ENCODE measurements at regions of chr16 and their contacts with region 1.

Region 1: GRCh38 chr16:53773150-53773846 is 69.3 kb downstream of the FTO start:
- DNase-seq: peak; percentile 72
- H3K4me3 ChIP-seq: no peak overlapping the region
- H3K27ac ChIP-seq: peak overlapping the region; percentile 11
- H3K4me1 ChIP-seq: peaks cover 60% of the 10 kb centered on the region
- H3K27me3 ChIP-seq: no peaks in the 10 kb centered on the region
- CTCF ChIP-seq: peak; percentile 70 to 81

Region 2: DNA sequence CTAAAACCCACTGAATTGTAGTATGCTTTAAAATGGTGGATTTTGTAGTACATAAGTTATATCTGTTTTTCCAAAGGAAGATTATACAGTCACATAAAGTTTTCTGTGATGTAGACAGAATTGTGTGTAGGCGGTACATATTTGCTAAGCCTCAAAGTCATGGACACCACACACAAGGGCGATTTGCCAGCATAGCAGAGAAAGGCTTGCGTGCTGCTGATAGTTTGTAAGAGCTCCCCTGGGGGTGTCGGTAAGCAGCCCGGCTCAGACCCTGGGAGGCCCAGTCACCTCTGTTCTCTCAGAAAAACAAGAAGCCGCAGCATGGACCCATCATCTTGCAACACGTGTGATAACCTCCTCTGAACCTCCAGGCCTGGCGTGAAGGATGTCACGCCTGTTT is 232.0 kb before region 1 on chr16:
- CTCF ChIA-PET with region 1: no interaction called
- dilution Hi-C with region 1: no loop called
- in situ Hi-C with region 1: no loop called
- intact Hi-C with region 1: no loop called
- DNase-seq: no peak
- H3K4me3 ChIP-seq: no peak overlapping the region
- H3K27ac ChIP-seq: no peak overlapping the region
- H3K4me1 ChIP-seq: no peaks in the 10 kb centered on the region
- H3K27me3 ChIP-seq: no peaks in the 10 kb centered on the region
- CTCF ChIP-seq: no peak

Region 3: GRCh38 chr16:53629607-53630312 is 143.5 kb before region 1 on chr16:
- CTCF ChIA-PET with region 1: no interaction called
- dilution Hi-C with region 1: no loop called
- in situ Hi-C with region 1: no loop called
- intact Hi-C with region 1: no loop called
- DNase-seq: no peak
- H3K4me3 ChIP-seq: no peak overlapping the region
- H3K27ac ChIP-seq: no peak overlapping the region
- H3K4me1 ChIP-seq: no peaks in the 10 kb centered on the region
- H3K27me3 ChIP-seq: no peaks in the 10 kb centered on the region
- CTCF ChIP-seq: no peak

Region 4: DNA sequence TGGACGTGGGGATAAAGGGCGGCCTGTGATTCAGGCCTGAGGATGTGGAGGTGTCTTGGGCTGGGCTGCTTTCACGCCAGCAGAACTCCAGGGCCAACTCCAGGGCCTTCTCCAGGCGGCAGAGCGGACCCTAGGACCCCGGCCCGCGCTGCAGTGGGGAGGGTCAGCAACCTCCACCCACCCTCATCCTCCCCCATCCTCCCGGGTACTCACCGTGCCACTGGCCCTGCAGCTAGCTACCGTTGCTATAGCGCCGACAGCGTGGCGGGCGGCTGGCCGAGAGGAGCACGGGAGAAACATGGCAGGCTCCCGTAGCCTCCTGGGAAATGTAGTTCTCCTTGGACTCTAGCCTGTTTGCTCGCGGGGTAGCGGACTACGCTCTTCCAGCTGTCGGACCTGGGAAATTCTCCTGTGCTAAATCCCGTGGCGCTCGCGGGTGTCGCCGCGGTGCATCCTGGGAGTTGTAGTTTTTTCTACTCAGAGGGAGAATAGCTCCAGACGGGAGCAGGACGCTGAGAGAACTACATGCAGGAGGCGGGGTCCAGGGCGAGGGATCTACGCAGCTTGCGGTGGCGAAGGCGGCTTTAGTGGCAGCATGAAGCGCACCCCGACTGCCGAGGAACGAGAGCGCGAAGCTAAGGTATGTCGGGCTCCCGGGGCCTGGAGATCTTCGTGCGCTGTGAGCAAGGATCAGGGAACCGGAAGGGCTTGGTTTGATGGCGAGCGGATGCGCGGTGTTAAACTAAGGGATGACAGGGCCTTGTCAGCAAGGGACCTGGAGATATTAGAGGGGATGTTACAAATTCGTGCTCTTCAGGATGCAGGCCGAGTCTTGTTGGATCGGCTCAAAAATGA is 69.5 kb before region 1 on chr16 and contains the starts of genes FTO and RPGRIP1L:
- CTCF ChIA-PET with region 1: no interaction called
- dilution Hi-C with region 1: no loop called
- in situ Hi-C with region 1: no loop called
- intact Hi-C with region 1: loop called (anchors 5 kb)
- DNase-seq: peak; percentile 99
- H3K4me3 ChIP-seq: peak within 1 kb of the TSS; percentile 95 to 99 (median 98)
- H3K27ac ChIP-seq: peak within 1 kb of the TSS; percentile 84
- H3K4me1 ChIP-seq: peaks cover 13% of the 10 kb centered on the region
- H3K27me3 ChIP-seq: no peaks in the 10 kb centered on the region
- CTCF ChIP-seq: no peak
- total RNA-seq, gene FTO: 76.4 to 155 TPM
- total RNA-seq, gene RPGRIP1L: 9.9 to 11.2 TPM

Region 5: GRCh38 chr16:53839150-53839549 is 65.9 kb after region 1 on chr16:
- CTCF ChIA-PET with region 1: no interaction called
- dilution Hi-C with region 1: no loop called
- in situ Hi-C with region 1: no loop called
- intact Hi-C with region 1: loop called (anchors 1 kb)
- DNase-seq: peak; percentile 70
- H3K4me3 ChIP-seq: peak overlapping the region in 1 of 3 experiments; percentile 19
- H3K27ac ChIP-seq: peak overlapping the region; percentile 90
- H3K4me1 ChIP-seq: peaks cover 4% of the 10 kb centered on the region
- H3K27me3 ChIP-seq: no peaks in the 10 kb centered on the region
- CTCF ChIP-seq: no peak

Region 6: GRCh38 chr16:53945996-53946395 is 172.7 kb after region 1 on chr16:
- CTCF ChIA-PET with region 1: no interaction called
- dilution Hi-C with region 1: no loop called
- in situ Hi-C with region 1: no loop called
- intact Hi-C with region 1: loop called (anchors 1 kb)
- DNase-seq: peak; percentile 43
- H3K4me3 ChIP-seq: no peak overlapping the region
- H3K27ac ChIP-seq: no peak overlapping the region
- H3K4me1 ChIP-seq: peaks cover 3% of the 10 kb centered on the region
- H3K27me3 ChIP-seq: no peaks in the 10 kb centered on the region
- CTCF ChIP-seq: peak; percentile 83 to 94

Region 7: DNA sequence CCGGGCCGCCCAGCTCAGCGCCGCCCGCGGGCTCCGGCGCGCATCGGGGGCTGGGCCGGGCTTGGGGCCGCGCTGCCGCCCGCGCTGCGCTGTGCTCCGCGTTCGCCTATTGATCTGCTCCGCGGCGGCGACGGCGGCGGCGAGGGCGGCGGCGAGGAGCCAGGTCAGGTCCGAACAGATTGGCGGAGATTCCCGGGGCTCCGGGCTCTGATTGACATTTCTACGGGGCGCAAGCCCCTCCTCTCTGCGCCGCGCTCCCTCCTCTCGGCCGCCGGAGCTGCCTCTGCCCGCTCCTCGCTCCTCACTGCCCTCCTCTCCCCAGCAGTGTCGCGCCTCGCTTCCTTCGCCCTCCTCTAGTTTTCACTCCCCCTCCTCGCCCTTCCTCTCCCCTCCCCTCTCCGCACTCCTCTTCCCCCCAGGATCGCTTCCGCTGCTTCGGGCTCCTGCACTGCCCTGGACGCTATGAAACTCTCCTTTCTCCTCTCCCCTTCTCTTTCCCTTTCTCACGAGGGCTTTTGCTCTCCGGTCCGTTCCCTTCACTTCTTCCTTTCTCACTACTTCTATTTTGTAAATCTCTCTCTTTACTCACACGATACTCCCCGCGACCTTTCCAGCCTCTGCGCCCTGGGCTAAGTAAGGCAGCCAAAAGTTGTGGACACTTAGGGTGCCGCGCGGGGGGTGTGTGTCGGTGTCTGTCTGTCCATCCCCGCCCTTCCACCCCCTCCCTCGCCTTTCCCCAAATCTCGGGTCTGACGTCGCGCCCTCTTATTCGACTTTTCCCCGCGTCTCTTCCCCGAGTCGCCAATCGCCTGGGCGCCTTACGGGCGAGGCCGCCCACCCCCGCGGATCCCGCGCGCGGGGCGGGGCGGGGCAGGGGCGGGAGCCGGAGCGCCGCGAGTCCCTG is 513.0 kb after region 1 on chr16 and contains the start of gene IRX3:
- CTCF ChIA-PET with region 1: interaction called, 3 read pairs
- dilution Hi-C with region 1: no loop called
- in situ Hi-C with region 1: no loop called
- intact Hi-C with region 1: loop called (anchors 1 kb)
- DNase-seq: peak; percentile 94
- H3K4me3 ChIP-seq: peak within 1 kb of the TSS; percentile 66 to 85 (median 80)
- H3K27ac ChIP-seq: peak within 1 kb of the TSS; percentile 74
- H3K4me1 ChIP-seq: peaks cover 30% of the 10 kb centered on the region
- H3K27me3 ChIP-seq: no peaks in the 10 kb centered on the region
- CTCF ChIP-seq: no peak
- total RNA-seq, gene IRX3: 7.2 to 15.5 TPM

Region 8: DNA sequence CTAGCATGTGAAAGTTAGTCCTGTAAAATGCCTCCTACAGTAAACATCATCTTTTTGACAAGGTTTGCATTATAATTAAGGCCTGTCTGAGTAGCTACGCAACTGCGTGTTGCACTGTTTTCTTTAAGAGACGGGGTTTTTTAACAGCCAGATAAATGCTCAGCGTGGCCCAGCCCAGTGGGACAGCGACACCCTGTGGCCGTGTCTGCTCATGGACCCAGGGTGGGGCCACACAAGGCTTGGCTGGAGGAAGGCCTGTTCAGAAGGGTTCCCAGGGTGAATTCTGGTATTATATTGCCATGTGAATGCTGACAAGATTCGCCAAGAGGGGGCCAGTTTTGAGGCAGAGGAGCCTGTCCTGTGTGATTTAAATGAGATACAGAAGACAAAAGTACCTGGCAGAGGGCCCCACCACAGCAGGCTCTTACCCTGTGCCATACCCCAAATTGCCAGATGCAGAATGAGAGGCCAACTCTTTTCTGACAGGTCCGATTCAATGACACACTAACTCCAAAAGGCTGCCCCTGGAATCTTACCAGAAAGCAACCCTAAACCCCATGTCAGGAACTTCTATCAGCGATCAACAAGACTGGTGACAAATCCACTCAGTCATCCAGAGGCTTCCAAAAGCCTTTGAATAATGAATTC is 1484.8 kb after region 1 on chr16:
- CTCF ChIA-PET with region 1: no interaction called
- dilution Hi-C with region 1: no loop called
- in situ Hi-C with region 1: no loop called
- intact Hi-C with region 1: loop called (anchors 10 kb)
- DNase-seq: peak; percentile 46
- H3K4me3 ChIP-seq: no peak overlapping the region
- H3K27ac ChIP-seq: no peak overlapping the region
- H3K4me1 ChIP-seq: no peaks in the 10 kb centered on the region
- H3K27me3 ChIP-seq: no peaks in the 10 kb centered on the region
- CTCF ChIP-seq: peak; percentile 91 to 95